PC-9 (cell line): ENCODE measurements at regions of chr6 and their contacts with region 1.

Region 1: GRCh38 chr6:98215531-98215930 is 618.8 kb upstream of the POU3F2 start:
- DNase-seq: no peak
- H3K4me3 ChIP-seq: no peak overlapping the region
- H3K27ac ChIP-seq: no peak overlapping the region
- H3K4me1 ChIP-seq: no peaks in the 10 kb centered on the region
- H3K27me3 ChIP-seq: no peaks in the 10 kb centered on the region
- CTCF ChIP-seq: no peak

Region 2: GRCh38 chr6:98200084-98200483 is 15.4 kb before region 1 on chr6:
- CTCF ChIA-PET with region 1: no interaction called
- POLR2A ChIA-PET with region 1: no interaction called
- intact Hi-C with region 1: loop called (anchors 1 kb)
- DNase-seq: no peak
- H3K4me3 ChIP-seq: no peak overlapping the region
- H3K27ac ChIP-seq: no peak overlapping the region
- H3K4me1 ChIP-seq: no peaks in the 10 kb centered on the region
- H3K27me3 ChIP-seq: no peaks in the 10 kb centered on the region
- CTCF ChIP-seq: no peak